ENCODE measurements at regions of chr11 and their contacts with region 1.

Region 1: GRCh38 chr11:118051611-118052461 is 25.0 kb upstream of the TMPRSS4 start:
- DNase-seq: peak; percentile 81
- H3K4me3 Mint-ChIP-seq: peak overlapping the region; percentile 45
- H3K27ac Mint-ChIP-seq: peak overlapping the region; percentile 95
- H3K4me1 Mint-ChIP-seq: peaks cover 62% of the 10 kb centered on the region
- H3K27me3 Mint-ChIP-seq: peaks cover 4% of the 10 kb centered on the region

Region 2: GRCh38 chr11:117817368-117818040 is 234.3 kb before region 1 on chr11:
- CTCF ChIA-PET with region 1: interaction called, 96 read pairs
- POLR2A ChIA-PET with region 1: interaction called, 7 read pairs
- DNase-seq: peak; percentile 89
- H3K4me3 Mint-ChIP-seq: no peak overlapping the region
- H3K27ac Mint-ChIP-seq: peak overlapping the region; percentile 73
- H3K4me1 Mint-ChIP-seq: peaks cover 65% of the 10 kb centered on the region
- H3K27me3 Mint-ChIP-seq: no peaks in the 10 kb centered on the region

Region 3: GRCh38 chr11:117843666-117844484 is 208.0 kb before region 1 on chr11:
- CTCF ChIA-PET with region 1: interaction called, 103 read pairs
- POLR2A ChIA-PET with region 1: interaction called, 11 read pairs
- DNase-seq: peak; percentile 85
- H3K4me3 Mint-ChIP-seq: no peak overlapping the region
- H3K27ac Mint-ChIP-seq: no peak overlapping the region
- H3K4me1 Mint-ChIP-seq: peaks cover 1% of the 10 kb centered on the region
- H3K27me3 Mint-ChIP-seq: peaks cover 6% of the 10 kb centered on the region

Region 4: GRCh38 chr11:117979481-117980211 is 72.2 kb before region 1 on chr11:
- CTCF ChIA-PET with region 1: interaction called, 111 read pairs
- POLR2A ChIA-PET with region 1: interaction called, 681 read pairs
- DNase-seq: no peak
- H3K4me3 Mint-ChIP-seq: no peak overlapping the region
- H3K27ac Mint-ChIP-seq: peak overlapping the region; percentile 77
- H3K4me1 Mint-ChIP-seq: peaks cover 71% of the 10 kb centered on the region
- H3K27me3 Mint-ChIP-seq: no peaks in the 10 kb centered on the region

Region 5: DNA sequence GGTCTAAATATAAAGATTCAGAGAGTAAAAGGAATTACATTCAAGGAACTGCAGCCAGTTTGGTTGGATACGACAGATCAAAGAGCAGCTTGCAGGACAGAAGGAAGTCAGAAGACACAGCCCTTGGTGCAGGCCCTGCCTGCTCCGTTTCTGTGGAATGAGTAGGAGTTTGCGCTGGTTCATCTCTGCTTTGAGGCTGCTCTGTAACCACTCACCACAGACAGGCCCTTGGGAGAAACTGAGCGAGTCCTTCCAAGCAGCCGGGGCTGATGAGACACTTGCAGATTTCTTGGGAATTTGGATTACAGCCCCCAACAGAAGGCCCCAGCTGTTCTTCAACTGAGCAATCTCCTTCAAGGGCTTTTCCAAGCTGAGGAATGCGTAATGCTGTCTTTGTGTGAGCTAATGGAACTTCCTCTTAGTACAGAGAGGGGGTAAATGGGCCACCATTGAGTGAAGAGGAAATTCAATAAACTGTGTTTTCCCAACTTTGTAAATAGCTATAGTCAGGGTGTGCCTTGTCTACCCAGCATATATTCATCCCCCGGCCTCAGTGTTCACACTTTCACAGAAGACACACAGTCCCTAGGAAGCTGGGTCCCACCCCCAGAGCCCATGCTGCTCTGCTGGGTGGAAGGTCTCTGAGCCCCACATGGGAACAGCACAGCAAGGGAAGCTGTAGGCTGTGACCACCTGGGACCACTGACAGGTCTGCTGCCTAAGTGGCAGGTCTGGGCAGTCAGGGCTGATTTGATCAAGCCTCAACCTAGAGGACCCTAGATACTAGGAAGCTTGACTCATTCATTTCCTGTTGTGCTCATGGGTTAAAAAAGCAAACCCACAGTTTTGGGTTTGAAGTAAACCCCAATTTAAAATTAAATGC is 49.1 kb before region 1 on chr11:
- CTCF ChIA-PET with region 1: interaction called, 192 read pairs
- POLR2A ChIA-PET with region 1: interaction called, 681 read pairs
- DNase-seq: peak; percentile 73
- H3K4me3 Mint-ChIP-seq: peak overlapping the region; percentile 58
- H3K27ac Mint-ChIP-seq: peak overlapping the region; percentile 99
- H3K4me1 Mint-ChIP-seq: peaks cover 100% of the 10 kb centered on the region
- H3K27me3 Mint-ChIP-seq: no peaks in the 10 kb centered on the region

Measured in activated CD4-positive, alpha-beta memory T cell treated with anti-CD3 and anti-CD28 coated beads, Interleukin-2, amount 10 ng/mL, durations not matched to agents 7 days and 5 days (primary cell).